ENCODE measurements at regions of chr17 and their contacts with region 1.

Region 1: DNA sequence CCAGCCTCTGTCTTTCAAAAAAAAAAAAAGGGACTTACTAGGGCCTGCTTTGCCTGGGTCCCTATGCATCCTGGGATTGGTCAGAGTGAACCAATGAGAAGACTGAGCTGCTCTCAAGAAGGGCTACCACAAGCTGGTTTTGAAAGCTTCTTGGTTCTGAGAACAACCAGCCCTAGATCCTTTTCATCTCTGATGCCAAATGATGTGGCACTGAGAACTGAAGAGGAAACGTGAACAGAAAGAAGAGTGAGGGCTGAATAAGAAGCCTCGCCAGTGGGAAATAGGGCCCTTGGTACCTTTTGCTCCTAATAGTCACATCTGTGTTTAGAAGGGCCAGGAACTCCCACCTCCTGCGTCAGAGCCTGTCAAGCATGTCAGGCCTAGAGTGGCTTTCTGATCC is 10.7 kb downstream of the TACO1 start:
- DNase-seq: no peak
- ATAC-seq: peak in 1 of 2 experiments; percentile 29; a peak in 1 of 6 replicates
- H3K4me3 ChIP-seq: no peak overlapping the region
- H3K27ac ChIP-seq: no peak overlapping the region
- H3K4me1 ChIP-seq: no peaks in the 10 kb centered on the region
- CTCF ChIP-seq: no peak
- EP300 ChIP-seq: no peak
- POLR2A ChIP-seq: no peak
- RAD21 ChIP-seq: no peak

Region 2: GRCh38 chr17:62671583-62672312 is 939.6 kb before region 1 on chr17:
- CTCF ChIA-PET with region 1: interaction called, 11 read pairs
- POLR2A ChIA-PET with region 1: no interaction called
- DNase-seq: no peak
- ATAC-seq: peak; percentile 20 to 35; a peak in 4 of 6 replicates
- H3K4me3 ChIP-seq: no peak overlapping the region
- H3K27ac ChIP-seq: no peak overlapping the region
- H3K4me1 ChIP-seq: peaks cover 6% of the 10 kb centered on the region; the same call in 1 of the 3 replicates
- CTCF ChIP-seq: no peak
- EP300 ChIP-seq: no peak
- POLR2A ChIP-seq: no peak
- RAD21 ChIP-seq: no peak

Region 3: GRCh38 chr17:63434876-63435684 is 176.3 kb before region 1 on chr17:
- CTCF ChIA-PET with region 1: interaction called, 336 read pairs
- POLR2A ChIA-PET with region 1: no interaction called
- DNase-seq: peak; percentile 62 to 76
- ATAC-seq: peak; percentile 25 to 45; a peak in 5 of 6 replicates
- H3K4me3 ChIP-seq: no peak overlapping the region
- H3K27ac ChIP-seq: peak overlapping the region; percentile 37 to 85
- H3K4me1 ChIP-seq: peaks cover 53% of the 10 kb centered on the region
- CTCF ChIP-seq: peak; percentile 23; the same call in 2 of the 3 replicates
- EP300 ChIP-seq: no peak
- POLR2A ChIP-seq: no peak
- RAD21 ChIP-seq: no peak; a peak in 1 of 5 replicates

Region 4: DNA sequence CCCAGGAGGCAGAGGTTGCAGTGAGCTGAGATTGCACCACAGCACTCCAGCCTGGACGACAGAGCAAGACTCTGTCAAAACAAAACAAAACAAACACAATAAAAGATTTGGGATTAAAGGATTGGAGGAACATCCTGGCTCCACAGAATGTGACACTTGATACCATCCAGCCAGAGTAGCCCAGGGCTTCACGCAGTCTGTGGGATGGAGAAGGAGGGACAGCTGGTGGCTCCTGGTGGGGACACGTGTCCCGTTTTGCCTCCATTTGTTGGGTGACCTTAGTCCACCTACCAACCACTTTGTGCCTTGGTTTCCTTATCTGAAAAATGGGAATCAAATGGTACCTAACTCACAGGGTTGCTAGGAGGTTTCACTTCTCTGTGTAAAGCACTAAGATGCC is 152.9 kb before region 1 on chr17:
- CTCF ChIA-PET with region 1: interaction called, 14 read pairs
- POLR2A ChIA-PET with region 1: no interaction called
- DNase-seq: no peak
- ATAC-seq: 0 out of 6 replicates have a peak, but pooled peaks of 1 of the 2 experiments have one; percentile 8
- H3K4me3 ChIP-seq: no peak overlapping the region
- H3K27ac ChIP-seq: no peak overlapping the region
- H3K4me1 ChIP-seq: peaks cover 25% of the 10 kb centered on the region
- CTCF ChIP-seq: no peak
- EP300 ChIP-seq: no peak
- POLR2A ChIP-seq: no peak
- RAD21 ChIP-seq: no peak

Region 5: GRCh38 chr17:63561830-63562229 is 49.5 kb before region 1 on chr17:
- CTCF ChIA-PET with region 1: interaction called, 10 read pairs
- POLR2A ChIA-PET with region 1: no interaction called
- DNase-seq: no peak
- ATAC-seq: no peak
- H3K4me3 ChIP-seq: no peak overlapping the region
- H3K27ac ChIP-seq: no peak overlapping the region
- H3K4me1 ChIP-seq: no peaks in the 10 kb centered on the region
- CTCF ChIP-seq: no peak
- EP300 ChIP-seq: no peak
- POLR2A ChIP-seq: no peak
- RAD21 ChIP-seq: no peak

Region 6: DNA sequence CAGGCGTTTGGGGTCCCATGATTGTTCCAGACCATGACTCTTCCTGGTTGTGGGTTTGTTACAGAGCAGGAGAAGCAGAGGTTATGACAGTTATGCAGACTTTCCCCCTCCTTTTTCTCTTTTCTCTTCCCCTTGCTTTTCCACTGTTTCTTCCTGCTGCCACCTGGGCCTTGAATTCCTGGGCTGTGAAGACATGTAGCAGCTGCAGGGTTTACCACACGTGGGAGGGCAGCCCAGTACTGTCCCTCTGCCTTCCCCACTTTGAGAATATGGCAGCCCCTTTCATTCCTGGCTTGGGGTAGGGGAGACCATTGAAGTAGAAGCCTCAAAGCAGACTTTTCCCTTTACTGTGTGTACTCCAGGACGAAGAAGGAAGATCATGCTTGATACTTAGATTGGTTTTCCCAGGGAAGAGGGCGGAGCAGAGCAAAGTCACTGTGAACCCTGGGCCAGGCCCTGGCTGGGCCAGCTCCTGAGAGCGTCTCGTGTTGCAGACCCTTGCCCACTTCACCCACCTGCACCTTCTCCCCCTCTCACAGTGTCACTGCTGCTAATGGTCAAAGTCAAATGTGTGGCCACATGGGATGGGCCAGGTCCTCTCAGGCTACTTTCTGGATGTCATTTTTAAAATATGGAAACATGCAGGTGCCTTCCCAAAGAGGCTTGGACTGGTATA is 18.4 kb before region 1 on chr17:
- CTCF ChIA-PET with region 1: interaction called, 25 read pairs
- POLR2A ChIA-PET with region 1: interaction called, 3 read pairs
- DNase-seq: no peak
- ATAC-seq: no peak; a peak in 1 of 6 replicates
- H3K4me3 ChIP-seq: no peak overlapping the region
- H3K27ac ChIP-seq: no peak overlapping the region
- H3K4me1 ChIP-seq: no peaks in the 10 kb centered on the region
- CTCF ChIP-seq: no peak
- EP300 ChIP-seq: no peak
- POLR2A ChIP-seq: no peak
- RAD21 ChIP-seq: no peak

Region 7: DNA sequence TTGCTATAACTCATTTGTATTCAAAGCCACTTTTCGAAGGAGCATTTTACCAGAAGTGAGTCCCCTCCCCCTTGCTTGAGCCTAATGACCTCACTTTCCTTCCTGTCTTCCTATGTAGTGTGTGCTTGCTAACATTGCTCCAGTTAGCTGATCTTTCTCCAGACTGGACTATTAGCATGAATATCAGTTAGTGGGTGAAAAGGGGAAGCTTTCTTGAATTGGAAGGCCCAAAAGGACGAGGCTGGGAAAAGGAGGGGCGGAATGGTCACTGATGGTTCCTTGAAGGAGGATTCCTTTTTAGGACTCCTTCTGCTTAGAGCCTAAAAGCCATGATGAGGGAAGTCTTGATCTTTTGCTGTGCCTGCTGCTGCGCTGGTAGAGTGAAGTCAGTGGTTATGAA is 22.8 kb after region 1 on chr17:
- CTCF ChIA-PET with region 1: interaction called, 21 read pairs
- POLR2A ChIA-PET with region 1: no interaction called
- DNase-seq: no peak
- ATAC-seq: no peak
- H3K4me3 ChIP-seq: no peak overlapping the region
- H3K27ac ChIP-seq: no peak overlapping the region
- H3K4me1 ChIP-seq: no peaks in the 10 kb centered on the region
- CTCF ChIP-seq: no peak
- EP300 ChIP-seq: no peak
- POLR2A ChIP-seq: no peak
- RAD21 ChIP-seq: no peak

Region 8: DNA sequence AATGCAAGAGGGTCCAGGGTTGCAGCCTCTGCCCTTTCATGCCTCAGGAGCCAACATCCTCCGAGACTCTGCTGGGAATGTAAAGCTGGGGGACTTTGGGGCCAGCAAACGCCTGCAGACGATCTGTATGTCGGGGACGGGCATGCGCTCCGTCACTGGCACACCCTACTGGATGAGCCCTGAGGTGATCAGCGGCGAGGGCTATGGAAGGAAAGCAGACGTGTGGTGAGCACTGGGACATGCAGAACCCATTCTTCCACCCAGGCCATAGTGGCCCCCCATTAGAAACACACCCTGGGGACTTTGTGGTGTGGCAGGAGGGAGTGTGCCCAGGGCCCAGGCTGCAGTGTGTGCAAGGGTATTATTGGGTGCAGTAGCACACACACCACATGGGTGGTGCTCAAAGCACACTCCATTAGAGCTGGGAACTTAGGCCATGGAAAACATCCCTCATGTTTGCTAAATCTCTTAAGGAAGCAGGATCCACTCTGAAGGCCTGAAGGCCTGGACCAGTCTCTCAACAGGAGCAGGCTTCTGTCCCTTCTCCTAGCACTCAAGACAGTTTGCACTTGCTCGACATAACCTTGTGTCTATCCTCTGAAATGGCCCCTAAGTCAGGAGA is 81.0 kb after region 1 on chr17:
- CTCF ChIA-PET with region 1: no interaction called
- POLR2A ChIA-PET with region 1: no interaction called
- DNase-seq: peak in 1 of 2 experiments; percentile 29
- ATAC-seq: peak; percentile 12 to 25; a peak in 3 of 6 replicates
- H3K4me3 ChIP-seq: no peak overlapping the region
- H3K27ac ChIP-seq: no peak overlapping the region
- H3K4me1 ChIP-seq: no peaks in the 10 kb centered on the region
- CTCF ChIP-seq: no peak
- EP300 ChIP-seq: no peak
- POLR2A ChIP-seq: no peak
- RAD21 ChIP-seq: no peak; a peak in 1 of 5 replicates

Region 9: DNA sequence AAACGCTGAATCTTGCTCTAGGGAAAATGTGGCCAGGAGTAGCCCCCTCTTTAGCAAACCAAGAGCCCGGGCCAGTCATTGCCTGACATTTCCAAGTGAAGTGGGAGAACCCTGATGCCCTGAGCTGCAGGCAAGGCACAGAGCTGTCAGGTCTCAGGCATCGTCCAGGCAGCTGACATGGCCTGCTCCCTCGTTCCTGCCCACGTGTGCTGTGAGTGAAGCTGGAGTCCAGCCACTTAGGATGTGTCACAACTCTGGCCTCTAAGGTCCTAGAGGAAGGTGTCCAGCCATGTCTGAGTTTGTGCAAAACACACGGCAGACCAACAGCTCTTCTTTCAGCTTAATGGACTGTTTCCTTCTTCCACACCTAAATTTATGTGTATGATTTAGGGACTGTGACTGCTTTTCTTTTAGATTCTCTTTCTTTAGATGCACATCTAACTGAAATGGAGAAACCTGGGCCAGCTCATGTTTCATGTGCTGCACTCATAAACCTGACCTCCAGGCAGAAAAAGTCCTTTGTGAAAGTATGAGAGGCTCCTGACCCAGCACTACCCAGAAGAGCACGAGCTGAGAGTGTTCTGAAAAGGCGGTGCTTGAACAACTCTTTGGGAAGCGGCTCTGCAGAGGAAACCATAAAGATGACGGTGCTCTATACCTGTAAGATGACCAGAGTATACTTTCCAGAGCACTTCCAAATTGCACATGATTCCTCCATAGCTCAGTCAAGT is 103.4 kb after region 1 on chr17:
- CTCF ChIA-PET with region 1: no interaction called
- POLR2A ChIA-PET with region 1: no interaction called
- DNase-seq: no peak
- ATAC-seq: peak; percentile 39 to 54; a peak in 3 of 6 replicates
- H3K4me3 ChIP-seq: no peak overlapping the region
- H3K27ac ChIP-seq: no peak overlapping the region
- H3K4me1 ChIP-seq: no peaks in the 10 kb centered on the region
- CTCF ChIP-seq: no peak
- EP300 ChIP-seq: no peak
- POLR2A ChIP-seq: no peak
- RAD21 ChIP-seq: no peak

Measured in A549 (cell line).